ENCODE measurements at regions of chr7 and their contacts with region 1.

Region 1: DNA sequence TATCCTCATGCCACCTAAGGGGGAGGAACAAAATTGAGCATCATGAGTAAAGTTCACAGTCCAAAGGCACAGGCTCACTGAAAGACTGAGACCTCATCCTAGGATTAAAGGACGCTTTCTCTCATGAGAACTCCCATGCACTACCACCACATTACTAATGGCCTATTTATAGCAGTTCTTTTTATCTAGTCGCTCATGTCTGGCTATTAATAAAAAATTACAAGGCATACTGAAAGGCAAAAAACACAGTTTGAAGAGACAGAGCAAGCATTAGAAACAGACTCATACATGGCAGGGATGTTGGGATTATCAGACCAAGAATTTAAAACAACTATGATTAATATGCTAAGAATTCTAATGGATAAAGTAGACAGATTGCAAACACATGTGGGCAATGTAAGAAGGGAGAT is 46.0 kb upstream of the CDK13 start:
- DNase-seq: no peak
- ATAC-seq: no peak
- H3K4me3 ChIP-seq: no peak overlapping the region
- H3K27ac ChIP-seq: no peak overlapping the region
- H3K4me1 ChIP-seq: no peaks in the 10 kb centered on the region
- H3K27me3 ChIP-seq: 0 out of 2 replicates have a peak, but pooled peaks cover 5% of the 10 kb centered on the region
- CTCF ChIP-seq: no peak

Region 2: DNA sequence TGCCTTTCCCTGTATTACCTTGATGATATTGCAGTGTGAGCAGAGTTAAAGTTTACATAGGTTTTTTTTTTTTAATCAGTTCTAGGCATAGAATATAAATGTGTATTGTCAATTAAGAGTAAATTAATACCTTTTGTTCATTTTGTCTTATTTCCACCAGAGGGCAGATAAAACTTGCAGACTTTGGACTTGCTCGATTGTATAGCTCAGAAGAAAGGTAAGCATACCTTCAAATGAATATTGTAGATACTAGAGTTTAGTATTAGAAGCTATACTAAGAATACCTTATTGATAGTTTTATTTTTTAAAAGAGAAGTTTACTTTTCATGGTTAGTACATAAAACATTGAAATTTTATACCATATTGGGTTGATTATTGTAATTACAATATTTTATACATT is 143.6 kb after region 1 on chr7:
- CTCF ChIA-PET with region 1: no interaction called
- POLR2A ChIA-PET with region 1: no interaction called
- intact Hi-C with region 1: loop called (anchors 1 kb)
- DNase-seq: peak; percentile 10
- ATAC-seq: 0 out of 2 replicates have a peak, but pooled peaks have one; percentile 15
- H3K4me3 ChIP-seq: no peak overlapping the region
- H3K27ac ChIP-seq: no peak overlapping the region
- H3K4me1 ChIP-seq: no peaks in the 10 kb centered on the region
- H3K27me3 ChIP-seq: no peaks in the 10 kb centered on the region
- CTCF ChIP-seq: peak; percentile 48

Measured in PC-3 (cell line).